SK-N-SH (cell line): ENCODE measurements at regions of chr6 and their contacts with region 1.

Region 1: DNA sequence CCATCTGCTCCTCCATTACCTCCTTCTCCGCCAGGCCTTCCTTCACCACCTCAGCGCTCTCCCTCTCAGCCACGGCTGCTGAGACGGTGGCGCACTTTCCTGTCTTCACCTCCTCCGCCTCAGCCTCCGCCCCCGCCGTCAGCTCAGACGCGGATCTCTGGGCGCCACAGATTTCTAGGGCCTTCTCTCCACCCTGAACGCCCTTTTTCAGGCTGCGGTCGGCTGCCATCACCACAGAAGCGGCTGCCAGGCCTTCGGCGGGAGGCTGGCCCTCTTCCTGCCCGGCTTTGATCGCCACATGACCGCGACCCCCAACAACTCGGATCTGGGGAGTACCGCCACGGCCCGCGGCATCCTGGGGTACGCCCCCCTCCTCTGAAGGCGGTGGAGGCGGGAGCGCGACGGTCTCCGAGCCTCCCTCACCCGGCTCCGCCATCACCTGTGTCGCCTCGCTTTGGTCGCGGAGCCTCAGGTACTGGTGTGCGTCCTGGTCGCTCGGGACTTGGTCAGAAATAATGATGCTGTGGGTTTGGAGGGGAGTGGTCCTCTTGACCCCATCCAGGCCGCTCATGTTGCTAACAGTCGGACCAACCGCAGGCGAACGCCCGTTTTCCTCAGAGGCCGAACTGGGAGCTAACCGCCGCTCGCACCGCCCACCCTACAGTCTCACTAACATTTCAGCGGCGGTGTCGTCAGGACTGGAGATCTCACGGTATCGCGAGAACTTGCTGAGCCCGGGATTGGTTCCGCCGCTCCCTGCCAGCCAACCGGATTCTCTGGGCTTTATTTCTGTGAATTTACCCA is at the start of gene TSPYL1:
- DNase-seq: peak; percentile 91
- H3K4me3 ChIP-seq: peak within 1 kb of the TSS; percentile 62 to 82
- H3K27ac ChIP-seq: peak within 1 kb of the TSS; percentile 94 to 98
- H3K4me1 ChIP-seq: peaks cover 4 to 20% of the 10 kb centered on the region in 2 experiments; a peak in 2 of 4 replicates
- H3K27me3 ChIP-seq: no peaks in the 10 kb centered on the region
- CTCF ChIP-seq: peak; percentile 28
- EP300 ChIP-seq: peak in 1 of 2 experiments; percentile 72; a peak in 2 of 4 replicates
- RAD21 ChIP-seq: no peak
- polyA plus RNA-seq, gene TSPYL1: 27.9 and 31.7 TPM in 2 replicates

Region 2: DNA sequence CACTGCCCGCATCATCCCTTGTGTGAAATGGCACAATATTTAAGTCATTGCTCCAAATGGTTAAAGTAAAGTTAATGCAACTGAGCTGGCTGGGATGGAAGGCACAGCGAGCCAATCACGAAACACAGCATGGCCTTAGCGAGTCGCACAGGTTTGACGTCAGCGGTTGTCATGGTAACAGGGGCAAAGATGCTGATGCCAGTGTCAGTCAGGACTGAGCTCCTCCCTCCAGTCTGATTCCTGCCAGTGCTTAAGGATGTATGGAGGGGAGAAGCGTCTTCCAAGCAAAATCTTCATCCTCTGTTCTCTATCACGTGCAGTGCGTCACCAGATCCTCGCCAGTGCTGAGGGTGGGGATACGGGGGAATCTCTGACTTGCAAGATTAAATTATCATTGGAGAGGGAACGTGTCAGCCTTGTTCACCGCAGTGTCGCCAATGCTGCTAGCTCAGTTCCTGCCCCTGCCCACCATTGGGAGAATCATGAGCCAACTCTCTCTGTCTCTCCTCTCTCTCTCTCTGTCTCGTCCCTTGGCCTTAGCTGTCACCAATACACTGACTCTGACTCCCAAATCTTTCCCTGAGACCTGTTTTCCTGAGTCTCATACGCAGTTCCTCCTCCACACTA is 50.1 kb before region 1 on chr6:
- CTCF ChIA-PET with region 1: no interaction called
- POLR2A ChIA-PET with region 1: interaction called, 11 read pairs
- DNase-seq: peak; percentile 84
- H3K4me3 ChIP-seq: peak overlapping the region; percentile 64 to 71
- H3K27ac ChIP-seq: peak overlapping the region; percentile 71 to 89
- H3K4me1 ChIP-seq: peaks cover 3 to 10% of the 10 kb centered on the region in 2 experiments; a peak in 2 of 4 replicates
- H3K27me3 ChIP-seq: no peaks in the 10 kb centered on the region
- CTCF ChIP-seq: no peak
- EP300 ChIP-seq: 0 out of 4 replicates have a peak, but pooled peaks of 1 of the 2 experiments have one; percentile 15
- RAD21 ChIP-seq: no peak

Region 3: GRCh38 chr6:116561377-116562018 is 282.0 kb after region 1 on chr6:
- CTCF ChIA-PET with region 1: interaction called, 33 read pairs
- POLR2A ChIA-PET with region 1: no interaction called
- DNase-seq: peak; percentile 70
- H3K4me3 ChIP-seq: no peak overlapping the region; a peak in 1 of 4 replicates
- H3K27ac ChIP-seq: no peak overlapping the region
- H3K4me1 ChIP-seq: peaks cover 2 to 23% of the 10 kb centered on the region in 2 experiments; a peak in 3 of 4 replicates
- H3K27me3 ChIP-seq: no peaks in the 10 kb centered on the region
- CTCF ChIP-seq: peak; percentile 94
- EP300 ChIP-seq: no peak
- RAD21 ChIP-seq: peak; percentile 93

Region 4: GRCh38 chr6:116570856-116571682 is 291.6 kb after region 1 on chr6 and contains the start of gene RWDD1:
- CTCF ChIA-PET with region 1: no interaction called
- POLR2A ChIA-PET with region 1: interaction called, 12 read pairs
- DNase-seq: peak; percentile 97
- H3K4me3 ChIP-seq: peak within 1 kb of the TSS; percentile 97 to 98
- H3K27ac ChIP-seq: peak within 1 kb of the TSS; percentile 84 to 96
- H3K4me1 ChIP-seq: peaks cover 4 to 6% of the 10 kb centered on the region in 2 experiments; a peak in 3 of 4 replicates
- H3K27me3 ChIP-seq: no peaks in the 10 kb centered on the region
- CTCF ChIP-seq: no peak
- EP300 ChIP-seq: no peak
- RAD21 ChIP-seq: no peak
- polyA plus RNA-seq, gene RWDD1: 17.7 and 18.8 TPM in 2 replicates